Transverse colon (tissue), 4 donors: ENCODE measurements at regions of chr2 and their contacts with region 1.

Region 1: GRCh38 chr2:162221064-162221463 is 22.2 kb downstream of the FAP start:
- DNase-seq: peak; percentile 58
- H3K4me3 ChIP-seq: no peak overlapping the region
- H3K27ac ChIP-seq: no peak overlapping the region
- H3K4me1 ChIP-seq: no peaks in the 10 kb centered on the region
- H3K27me3 ChIP-seq: no peaks in the 10 kb centered on the region
- CTCF ChIP-seq: peak; percentile 67 to 82 (median 79)
- EP300 ChIP-seq: no peak
- POLR2A ChIP-seq: no peak

Region 2: DNA sequence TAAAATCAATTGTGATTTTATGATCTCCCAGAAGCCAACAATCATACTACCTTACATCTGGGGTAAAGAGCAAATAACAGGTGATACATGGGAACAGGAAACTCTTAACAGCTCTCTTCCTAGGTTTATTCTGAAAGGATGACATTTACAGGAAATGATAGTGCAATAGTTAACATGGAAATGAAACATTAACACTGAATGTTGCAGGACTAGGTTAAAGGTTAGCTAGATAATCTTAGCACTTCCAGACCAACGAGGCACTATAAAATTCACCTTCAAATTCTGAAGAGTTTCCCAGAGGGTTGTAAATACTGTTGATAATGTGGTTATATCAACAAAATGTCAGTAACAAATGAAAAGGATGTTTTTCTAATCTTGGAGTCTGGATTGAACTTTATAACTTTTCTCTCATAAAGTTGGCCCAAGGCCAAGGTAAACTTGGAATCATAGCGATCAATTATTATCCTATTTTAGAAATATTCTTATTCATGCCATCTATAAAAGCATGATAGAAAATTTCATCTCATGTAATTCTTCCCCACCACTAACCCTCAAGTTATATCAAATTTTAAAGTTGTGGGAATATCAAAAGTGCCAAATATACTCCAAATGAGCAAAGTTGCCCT is 36.1 kb before region 1 on chr2:
- in situ Hi-C with region 1: no loop called
- intact Hi-C with region 1: no loop called
- DNase-seq: no peak
- H3K4me3 ChIP-seq: no peak overlapping the region
- H3K27ac ChIP-seq: no peak overlapping the region
- H3K4me1 ChIP-seq: peaks cover 0 to 17% (median 0%) of the 10 kb centered on the region in 4 donors
- H3K27me3 ChIP-seq: no peaks in the 10 kb centered on the region
- CTCF ChIP-seq: no peak
- EP300 ChIP-seq: no peak
- POLR2A ChIP-seq: no peak

Region 3: GRCh38 chr2:162282765-162283425 is 61.8 kb after region 1 on chr2:
- in situ Hi-C with region 1: loop called in 1 of 4 experiments (anchors 10 kb)
- intact Hi-C with region 1: no loop called
- DNase-seq: no peak
- H3K4me3 ChIP-seq: no peak overlapping the region
- H3K27ac ChIP-seq: no peak overlapping the region
- H3K4me1 ChIP-seq: no peaks in the 10 kb centered on the region
- H3K27me3 ChIP-seq: no peaks in the 10 kb centered on the region
- CTCF ChIP-seq: no peak
- EP300 ChIP-seq: no peak
- POLR2A ChIP-seq: no peak

Region 4: GRCh38 chr2:162297925-162298552 is 77.0 kb after region 1 on chr2:
- in situ Hi-C with region 1: loop called in 2 of 4 experiments (anchors 10 kb)
- intact Hi-C with region 1: loop called (anchors 2 kb)
- DNase-seq: peak; percentile 58
- H3K4me3 ChIP-seq: no peak overlapping the region
- H3K27ac ChIP-seq: no peak overlapping the region
- H3K4me1 ChIP-seq: no peaks in the 10 kb centered on the region
- H3K27me3 ChIP-seq: no peaks in the 10 kb centered on the region
- CTCF ChIP-seq: peak; percentile 78 to 86 (median 81)
- EP300 ChIP-seq: no peak
- POLR2A ChIP-seq: no peak